Adrenal gland (tissue), 19 donors: ENCODE measurements at regions of chr9 and their contacts with region 1.

Region 1: DNA sequence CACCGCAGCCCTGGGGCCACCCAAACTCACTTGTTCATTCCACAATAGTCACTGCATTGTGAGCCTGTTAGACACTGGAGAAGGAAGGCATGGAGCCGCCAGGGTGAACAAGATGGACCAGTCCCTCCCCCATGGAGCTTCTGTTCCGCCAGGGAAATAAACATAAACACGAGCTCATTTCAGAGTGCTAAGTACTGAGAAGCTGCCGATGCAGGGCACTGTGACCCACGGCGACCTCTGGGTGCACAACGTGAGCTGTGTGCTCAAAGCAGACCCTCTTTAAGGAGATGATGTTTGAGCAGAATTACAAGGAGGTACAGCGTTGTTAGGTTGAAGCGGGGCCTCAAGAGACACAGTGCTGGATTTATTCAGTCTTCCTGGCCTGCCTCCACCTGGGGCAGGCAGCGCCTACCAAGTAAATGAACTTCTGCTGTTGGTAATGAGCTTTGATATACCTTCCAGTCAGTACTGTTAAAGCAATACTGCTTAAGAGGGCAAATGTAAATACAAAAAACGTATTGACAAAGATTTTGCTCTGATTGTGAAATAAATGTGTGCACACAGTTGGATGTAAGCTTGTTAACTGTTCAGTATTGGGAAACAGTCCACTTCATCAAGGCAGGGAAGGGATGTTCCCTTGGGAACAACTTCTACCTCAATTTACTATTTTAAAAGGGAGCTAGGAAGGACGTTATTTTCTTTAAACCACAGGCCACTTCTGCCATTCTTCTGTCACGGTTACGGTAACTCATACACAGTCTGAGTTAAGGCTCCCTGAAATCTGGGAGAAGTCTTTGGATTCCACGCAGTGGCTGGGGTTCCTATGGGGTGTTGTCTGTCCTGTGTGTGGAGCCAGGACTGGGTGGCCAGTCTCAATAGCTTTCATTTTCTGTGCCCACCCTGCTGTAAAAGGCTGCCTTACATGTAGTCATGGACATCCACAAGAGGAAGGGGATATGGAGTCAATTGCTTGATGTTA is 48.9 kb upstream of the DMRT1 start:
- DNase-seq: no peak
- H3K4me3 ChIP-seq: no peak overlapping the region
- H3K27ac ChIP-seq: no peak overlapping the region
- H3K4me1 ChIP-seq: no peaks in the 10 kb centered on the region
- H3K27me3 ChIP-seq: no peaks in the 10 kb centered on the region
- CTCF ChIP-seq: no peak
- POLR2A ChIP-seq: no peak

Region 2: DNA sequence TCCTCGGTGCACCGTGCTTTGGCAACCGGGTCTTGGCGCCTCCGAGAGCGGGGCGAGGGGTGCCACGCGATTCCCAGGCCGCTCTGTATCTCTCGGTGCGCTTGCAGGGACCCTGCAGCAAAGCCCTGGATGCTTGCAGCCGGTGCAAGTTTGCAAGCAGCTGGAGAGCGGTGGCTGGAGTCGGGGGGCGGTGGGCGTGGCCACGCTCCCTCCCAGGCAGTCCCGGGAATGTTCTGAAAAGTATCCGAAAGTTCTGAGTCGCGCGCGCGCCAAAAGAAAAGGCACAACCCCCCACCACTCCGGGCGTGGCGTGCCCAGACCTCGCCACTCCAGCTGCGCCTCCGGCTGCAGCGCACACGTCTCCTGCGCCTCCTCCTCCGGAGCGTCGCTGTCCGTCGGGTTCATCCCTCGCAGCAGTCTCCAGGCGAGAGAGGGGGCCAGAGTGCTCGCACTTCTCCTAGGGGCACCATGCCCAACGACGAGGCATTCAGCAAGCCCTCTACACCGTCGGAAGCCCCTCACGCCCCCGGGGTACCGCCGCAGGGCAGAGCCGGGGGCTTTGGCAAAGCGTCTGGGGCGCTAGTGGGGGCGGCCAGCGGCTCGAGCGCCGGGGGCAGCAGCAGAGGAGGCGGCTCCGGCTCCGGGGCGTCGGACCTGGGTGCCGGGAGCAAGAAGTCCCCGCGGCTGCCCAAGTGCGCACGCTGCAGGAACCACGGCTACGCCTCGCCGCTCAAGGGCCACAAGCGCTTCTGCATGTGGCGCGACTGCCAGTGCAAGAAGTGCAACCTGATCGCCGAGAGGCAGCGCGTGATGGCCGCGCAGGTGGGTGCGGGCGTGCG is 49.0 kb after region 1 on chr9 and contains the start of gene DMRT1:
- intact Hi-C with region 1: loop called in 1 of 2 experiments (anchors 5 kb)
- DNase-seq: no peak
- H3K4me3 ChIP-seq: no peak within 1 kb of the TSS
- H3K27ac ChIP-seq: no peak within 1 kb of the TSS
- H3K4me1 ChIP-seq: no peaks in the 10 kb centered on the region
- H3K27me3 ChIP-seq: peaks cover 51% of the 10 kb centered on the region
- CTCF ChIP-seq: no peak
- POLR2A ChIP-seq: no peak
- total RNA-seq, gene DMRT1: 9.2 TPM in 1 of 9 donors, not detected in the others

Region 3: DNA sequence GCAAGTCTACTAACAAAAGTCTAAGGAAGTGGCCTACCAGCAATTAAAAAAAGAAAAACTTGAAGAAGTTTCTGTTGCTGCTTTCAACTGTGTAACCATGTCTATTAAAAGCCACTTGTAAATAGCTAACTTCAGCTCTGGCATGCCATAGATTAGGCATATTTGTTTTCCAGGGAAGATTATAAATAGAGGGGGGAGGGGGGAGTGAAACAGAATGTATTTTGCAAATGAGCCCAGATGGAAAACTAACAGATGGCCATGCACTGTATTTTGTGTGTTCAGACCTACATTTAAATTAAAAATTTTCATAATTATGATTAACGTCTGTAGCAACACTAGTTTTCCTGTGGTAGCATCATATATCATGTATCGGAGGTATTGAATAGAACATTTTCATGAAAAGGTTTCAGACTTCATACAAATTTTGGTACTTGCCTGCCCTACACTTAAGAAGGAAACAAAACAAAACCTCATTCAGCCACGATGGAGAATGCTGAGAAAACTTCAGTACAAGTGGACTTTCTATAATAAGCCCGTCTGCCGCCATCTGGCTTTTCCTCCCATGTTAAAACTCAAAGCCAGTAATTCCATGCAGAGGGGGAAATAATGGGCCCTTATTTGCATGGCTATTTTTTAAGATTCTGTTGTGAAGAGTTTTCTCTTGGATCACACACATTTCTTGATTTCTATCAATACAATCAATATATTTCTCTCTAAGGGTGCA is 1002.1 kb after region 1 on chr9:
- intact Hi-C with region 1: no loop called
- DNase-seq: no peak
- H3K4me3 ChIP-seq: no peak overlapping the region
- H3K27ac ChIP-seq: no peak overlapping the region
- H3K4me1 ChIP-seq: no peaks in the 10 kb centered on the region
- H3K27me3 ChIP-seq: no peaks in the 10 kb centered on the region
- CTCF ChIP-seq: no peak
- POLR2A ChIP-seq: no peak